ENCODE measurements at regions of chr14 and their contacts with region 1.

Region 1: GRCh38 chr14:75077794-75078193 is 8.4 kb downstream of the ZC2HC1C start:
- DNase-seq: no peak
- H3K4me3 ChIP-seq: no peak overlapping the region
- CTCF ChIP-seq: no peak

Region 2: DNA sequence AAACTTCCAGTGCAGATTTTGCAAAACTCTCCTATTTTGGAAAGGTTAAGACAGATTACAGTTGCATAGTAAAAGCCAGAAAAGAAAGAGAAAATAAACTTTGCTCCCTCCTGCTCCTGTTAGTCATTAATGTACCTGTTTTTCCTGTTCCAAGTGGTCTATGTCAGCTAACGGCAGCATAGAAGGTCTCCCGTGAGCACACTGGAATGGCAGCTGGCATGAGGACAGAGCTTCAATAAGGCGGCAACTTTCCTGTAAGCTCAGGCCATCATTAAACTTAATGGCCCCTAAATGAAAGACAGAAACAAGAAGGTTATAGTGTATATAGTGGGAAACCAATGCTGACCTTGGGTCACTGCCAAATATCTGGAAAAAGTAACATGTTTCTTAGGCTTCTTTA is 59.1 kb before region 1 on chr14:
- in situ Hi-C with region 1: loop called (anchors 5 kb)
- DNase-seq: no peak
- H3K4me3 ChIP-seq: no peak overlapping the region
- CTCF ChIP-seq: no peak

Region 3: GRCh38 chr14:75044322-75044721 is 33.5 kb before region 1 on chr14:
- in situ Hi-C with region 1: loop called (anchors 5 kb)
- DNase-seq: peak; percentile 67
- H3K4me3 ChIP-seq: no peak overlapping the region
- CTCF ChIP-seq: no peak

Measured in astrocyte of the cerebellum (primary cell).